ENCODE measurements at regions of chr4 and their contacts with region 1.

Region 1: GRCh38 chr4:177047851-177048174 is 255.1 kb upstream of the VEGFC start:
- DNase-seq: no peak
- H3K4me3 ChIP-seq: no peak overlapping the region
- H3K27ac ChIP-seq: no peak overlapping the region
- H3K4me1 ChIP-seq: no peaks in the 10 kb centered on the region
- H3K27me3 ChIP-seq: no peaks in the 10 kb centered on the region
- CTCF ChIP-seq: no peak

Region 2: DNA sequence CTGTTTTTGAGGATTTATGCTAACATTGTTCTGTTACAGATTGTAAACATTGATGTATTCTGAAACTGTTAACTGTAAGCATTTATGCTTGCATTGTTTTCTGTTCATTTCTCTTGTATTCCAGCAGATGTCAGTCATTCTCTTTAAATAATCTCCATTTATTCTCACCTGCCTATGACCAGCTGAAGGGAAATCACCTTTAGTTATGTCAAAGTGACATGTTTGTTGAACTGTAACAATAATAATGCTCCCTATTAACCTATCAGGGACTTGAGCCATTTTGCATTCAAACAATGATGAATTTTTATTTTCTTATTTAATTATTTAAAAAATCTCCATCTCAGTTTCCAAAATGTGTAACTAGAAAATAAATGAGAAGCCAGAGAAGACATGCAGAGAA is 670.0 kb before region 1 on chr4:
- intact Hi-C with region 1: loop called (anchors 2 kb)
- DNase-seq: no peak
- H3K4me3 ChIP-seq: no peak overlapping the region
- H3K27ac ChIP-seq: no peak overlapping the region
- H3K4me1 ChIP-seq: no peaks in the 10 kb centered on the region
- H3K27me3 ChIP-seq: no peaks in the 10 kb centered on the region
- CTCF ChIP-seq: no peak

Region 3: DNA sequence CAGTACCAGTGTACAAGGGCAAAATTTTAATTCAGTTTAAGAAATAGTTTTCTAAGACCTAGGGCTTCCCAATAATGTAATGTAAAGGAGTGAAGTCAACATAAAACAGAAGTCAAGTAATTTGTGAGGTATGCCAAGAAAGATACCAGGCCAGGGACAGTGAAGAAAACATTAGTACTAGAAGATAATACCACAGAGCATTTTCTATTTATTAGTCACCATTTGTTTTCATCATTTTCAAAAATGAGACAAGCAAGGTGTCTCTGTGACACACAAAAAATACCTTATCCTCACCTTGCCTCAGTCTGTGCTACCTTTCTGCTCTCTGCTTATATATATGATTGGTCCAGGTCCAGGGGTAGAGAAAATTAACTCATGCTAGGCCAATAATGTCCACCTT is 301.9 kb before region 1 on chr4:
- intact Hi-C with region 1: no loop called
- DNase-seq: no peak
- H3K4me3 ChIP-seq: no peak overlapping the region
- H3K27ac ChIP-seq: no peak overlapping the region
- H3K4me1 ChIP-seq: no peaks in the 10 kb centered on the region
- H3K27me3 ChIP-seq: no peaks in the 10 kb centered on the region
- CTCF ChIP-seq: no peak

Region 4: GRCh38 chr4:176971576-176972115 is 76.2 kb before region 1 on chr4:
- intact Hi-C with region 1: no loop called
- DNase-seq: no peak
- H3K4me3 ChIP-seq: no peak overlapping the region
- H3K27ac ChIP-seq: no peak overlapping the region
- H3K4me1 ChIP-seq: no peaks in the 10 kb centered on the region
- H3K27me3 ChIP-seq: no peaks in the 10 kb centered on the region
- CTCF ChIP-seq: no peak

Region 5: GRCh38 chr4:177204126-177204525 is 156.3 kb after region 1 on chr4:
- intact Hi-C with region 1: no loop called
- DNase-seq: no peak
- H3K4me3 ChIP-seq: no peak overlapping the region
- H3K27ac ChIP-seq: no peak overlapping the region
- H3K4me1 ChIP-seq: no peaks in the 10 kb centered on the region
- H3K27me3 ChIP-seq: no peaks in the 10 kb centered on the region
- CTCF ChIP-seq: no peak

Measured in colonic mucosa (tissue), 4 donors.